Dendritic cell treated with granulocyte-macrophage colony-stimulating factor and Interleukin-4, amounts not matched to agents 40 ng/mL and 50 ng/mL, for 4 days (primary cell): ENCODE measurements at regions of chr1 and their contacts with region 1.

Region 1: DNA sequence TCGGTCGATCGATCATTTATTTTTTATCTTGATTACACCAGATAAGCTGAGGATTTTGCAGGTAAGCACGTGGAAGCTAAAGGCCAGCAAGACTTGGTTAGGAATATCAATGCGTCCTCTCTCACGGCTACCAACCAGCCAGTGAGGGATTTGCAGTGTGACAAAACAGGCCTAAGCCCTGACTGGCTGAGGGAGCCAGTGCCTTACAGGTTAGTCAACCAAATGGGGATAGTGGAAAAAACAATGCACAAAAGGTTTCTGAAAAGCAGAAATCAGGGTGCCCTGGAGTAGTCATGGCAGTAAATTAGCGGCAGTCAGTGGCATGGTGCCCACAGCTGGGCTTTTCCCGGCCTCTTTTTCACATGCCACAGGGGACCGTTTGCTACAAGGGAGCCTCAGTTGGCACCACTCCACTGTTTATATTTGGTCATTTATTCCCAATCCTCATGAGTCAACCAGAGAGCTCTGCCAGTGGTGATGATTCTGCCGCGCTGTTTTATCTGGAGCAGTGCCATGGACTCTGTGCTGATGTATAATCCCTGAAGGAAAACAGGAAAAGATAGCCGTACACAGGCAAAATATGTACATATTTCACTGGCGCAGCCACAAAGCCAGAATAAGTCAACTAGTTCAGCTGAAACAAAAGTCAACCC is 167.6 kb downstream of the RHOU start:
- H3K4me3 Mint-ChIP-seq: no peak overlapping the region
- H3K27ac Mint-ChIP-seq: no peak overlapping the region
- H3K4me1 Mint-ChIP-seq: peaks cover 11% of the 10 kb centered on the region
- H3K27me3 Mint-ChIP-seq: peaks cover 8% of the 10 kb centered on the region

Region 2: DNA sequence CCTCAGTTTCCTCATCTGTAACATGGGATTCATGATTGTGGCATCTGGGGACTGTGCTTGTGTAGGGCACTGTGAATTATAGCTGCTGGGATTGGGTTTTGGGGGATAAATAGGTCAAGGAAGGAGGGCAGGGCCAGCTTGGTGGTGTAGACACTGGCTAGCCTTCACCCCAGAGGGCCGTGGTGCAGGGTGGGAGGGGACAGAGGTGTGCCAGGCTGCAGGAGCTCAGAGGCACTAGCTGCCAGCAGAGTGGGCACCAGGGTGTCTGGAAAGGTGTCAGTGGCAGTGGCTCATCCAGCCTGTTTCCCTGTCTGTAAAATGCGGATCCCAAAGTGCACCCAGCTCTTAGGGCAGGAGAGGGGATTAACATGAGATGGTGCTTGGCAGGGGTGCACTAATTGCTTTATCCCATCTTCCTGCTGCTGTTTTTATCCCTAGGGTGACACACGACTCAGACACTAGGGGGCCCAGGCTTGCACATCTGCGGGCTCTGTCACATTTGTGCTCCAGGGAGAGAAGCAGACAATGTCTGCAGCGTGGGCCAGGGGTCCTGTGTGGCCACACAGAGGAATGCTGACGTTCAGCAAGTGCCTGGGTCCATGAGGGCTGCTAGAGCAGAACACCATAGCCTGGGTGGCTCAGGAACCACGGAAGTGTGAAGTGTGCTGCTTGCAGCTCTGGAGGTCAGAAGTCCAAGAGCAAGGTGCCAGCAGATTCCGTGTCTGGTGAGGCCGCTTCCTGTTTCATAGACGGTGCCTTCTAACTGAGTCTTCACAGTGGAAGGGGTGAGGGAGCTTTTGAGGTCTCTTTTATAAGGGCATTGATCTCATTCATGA is 675.7 kb before region 1 on chr1:
- intact Hi-C with region 1: no loop called
- H3K4me3 Mint-ChIP-seq: no peak overlapping the region
- H3K27ac Mint-ChIP-seq: peak overlapping the region; percentile 15
- H3K4me1 Mint-ChIP-seq: peaks cover 17% of the 10 kb centered on the region
- H3K27me3 Mint-ChIP-seq: no peaks in the 10 kb centered on the region

Region 3: GRCh38 chr1:228927946-228928898 is 25.3 kb after region 1 on chr1:
- intact Hi-C with region 1: no loop called
- H3K4me3 Mint-ChIP-seq: no peak overlapping the region
- H3K27ac Mint-ChIP-seq: no peak overlapping the region
- H3K4me1 Mint-ChIP-seq: peaks cover 33% of the 10 kb centered on the region
- H3K27me3 Mint-ChIP-seq: no peaks in the 10 kb centered on the region

Region 4: DNA sequence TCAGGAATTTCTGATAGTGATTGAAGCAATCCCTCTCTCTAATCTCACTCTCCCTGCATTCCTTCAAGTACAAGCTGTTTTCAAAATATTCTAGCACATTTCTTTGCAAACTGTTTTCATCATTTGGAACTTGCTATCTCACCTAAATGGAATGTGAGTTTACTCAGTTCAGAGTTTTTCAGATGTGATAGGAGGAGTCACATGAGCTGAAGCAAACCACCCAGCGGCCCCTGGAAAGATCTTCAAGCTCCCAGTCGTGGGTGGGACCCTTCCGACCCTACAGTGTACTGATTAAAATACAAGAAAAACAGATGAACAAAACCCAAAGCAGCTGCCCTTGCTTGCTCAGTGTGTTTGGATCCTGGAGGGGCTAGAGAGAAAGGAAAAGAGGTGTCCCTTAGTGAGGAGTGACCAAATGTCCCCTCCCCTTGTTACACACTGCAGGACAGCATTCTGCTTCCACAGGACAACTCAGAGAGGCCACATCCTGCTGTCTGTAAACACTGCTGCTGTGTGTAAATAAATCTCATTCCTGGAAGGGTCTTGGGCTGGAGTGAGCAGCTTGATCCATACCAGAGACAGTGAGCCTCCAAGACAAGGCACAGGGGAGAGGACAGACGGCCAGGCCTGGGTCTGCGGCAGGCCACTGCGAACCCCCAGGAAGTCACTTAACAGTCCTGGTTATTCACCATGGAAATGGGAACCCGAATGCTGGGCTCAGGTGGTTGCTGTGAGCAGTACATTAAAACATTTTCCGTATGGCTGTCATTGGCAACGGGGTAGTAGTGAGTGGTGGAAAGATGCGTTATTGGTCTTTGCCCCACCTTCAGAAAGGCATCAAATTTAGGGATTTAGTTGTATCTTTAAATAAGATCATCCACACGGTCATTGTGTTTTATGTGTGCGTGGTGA is 61.5 kb after region 1 on chr1:
- intact Hi-C with region 1: loop called (anchors 10 kb)
- H3K4me3 Mint-ChIP-seq: no peak overlapping the region
- H3K27ac Mint-ChIP-seq: no peak overlapping the region
- H3K4me1 Mint-ChIP-seq: peaks cover 22% of the 10 kb centered on the region
- H3K27me3 Mint-ChIP-seq: no peaks in the 10 kb centered on the region

Region 5: GRCh38 chr1:229059671-229060539 is 157.0 kb after region 1 on chr1:
- intact Hi-C with region 1: no loop called
- H3K4me3 Mint-ChIP-seq: no peak overlapping the region
- H3K27ac Mint-ChIP-seq: no peak overlapping the region
- H3K4me1 Mint-ChIP-seq: peaks cover 47% of the 10 kb centered on the region
- H3K27me3 Mint-ChIP-seq: peaks cover 15% of the 10 kb centered on the region

Region 6: DNA sequence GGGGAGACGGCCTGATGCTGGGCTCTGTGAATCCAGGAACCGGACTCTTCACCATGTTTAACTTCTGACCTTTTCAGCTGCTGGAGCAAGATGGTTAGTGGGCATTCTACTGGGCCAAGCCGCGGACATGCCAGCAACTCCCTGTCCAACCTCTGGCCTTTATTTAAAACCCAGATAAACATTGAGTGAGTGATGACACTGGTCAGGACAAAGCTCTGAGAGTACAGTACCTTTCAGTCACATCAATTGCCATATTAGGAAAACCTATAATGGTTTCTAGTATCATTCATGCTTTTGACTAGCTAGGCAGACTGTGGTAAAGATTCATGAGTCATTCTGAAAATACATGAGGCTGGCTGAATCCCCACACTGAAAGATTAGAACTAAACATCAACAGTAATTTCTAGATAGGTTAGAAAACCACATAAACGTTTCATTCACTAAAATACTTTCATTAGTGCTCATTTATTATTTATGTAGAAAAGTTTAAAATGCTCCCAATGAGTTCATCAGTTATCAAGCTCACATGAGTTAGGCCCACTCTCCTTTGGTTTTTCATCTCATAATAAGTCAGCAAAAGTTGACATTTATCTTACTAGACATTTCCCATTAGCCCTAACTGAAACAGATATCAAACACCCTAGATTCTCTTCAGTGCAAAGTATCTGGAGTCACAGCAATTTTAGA is 538.1 kb after region 1 on chr1:
- intact Hi-C with region 1: no loop called
- H3K4me3 Mint-ChIP-seq: no peak overlapping the region
- H3K27ac Mint-ChIP-seq: no peak overlapping the region
- H3K4me1 Mint-ChIP-seq: no peaks in the 10 kb centered on the region
- H3K27me3 Mint-ChIP-seq: peaks cover 14% of the 10 kb centered on the region